SK-N-SH (cell line): ENCODE measurements at regions of chr7 and their contacts with region 1.

Region 1: DNA sequence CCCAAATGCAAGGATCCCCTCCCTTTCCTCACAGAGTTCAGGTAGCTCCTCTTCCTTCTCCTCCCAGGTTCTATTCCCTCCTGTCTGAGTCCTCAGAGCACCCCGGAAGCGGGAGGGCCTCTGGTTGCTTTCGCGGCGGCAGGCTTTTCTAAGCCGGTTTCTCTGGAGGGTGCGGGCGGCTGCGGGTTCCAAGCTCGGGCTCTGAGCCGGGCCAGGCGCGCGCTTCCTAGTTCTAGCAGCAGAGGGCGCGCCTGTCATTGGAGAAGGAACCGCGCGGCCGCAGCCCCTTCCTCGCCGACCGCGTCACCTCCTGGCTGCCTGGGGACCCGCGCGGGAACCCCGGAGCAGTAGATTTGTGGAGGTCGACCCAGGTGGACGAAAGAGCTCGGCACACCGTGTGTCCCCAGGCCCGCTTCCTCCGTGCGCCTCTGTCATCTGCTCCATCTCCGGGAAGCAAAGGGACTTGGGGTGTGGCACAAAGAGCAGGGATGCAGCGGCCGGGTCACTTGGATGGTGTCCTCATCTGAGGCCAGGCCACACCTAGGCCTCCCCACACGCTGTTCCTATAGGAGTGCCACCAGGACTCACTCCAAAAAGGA is 389.0 kb upstream of the PODXL start:
- DNase-seq: peak; percentile 93
- H3K4me3 ChIP-seq: peak overlapping the region; percentile 23 to 37
- H3K27ac ChIP-seq: peak overlapping the region in 1 of 2 experiments; percentile 31; a peak in 1 of 4 replicates
- H3K4me1 ChIP-seq: peaks cover 13 to 31% of the 10 kb centered on the region in 2 experiments; a peak in 3 of 4 replicates
- H3K27me3 ChIP-seq: no peaks in the 10 kb centered on the region
- CTCF ChIP-seq: peak; percentile 97
- EP300 ChIP-seq: no peak; a peak in 1 of 4 replicates
- RAD21 ChIP-seq: peak; percentile 95

Region 2: DNA sequence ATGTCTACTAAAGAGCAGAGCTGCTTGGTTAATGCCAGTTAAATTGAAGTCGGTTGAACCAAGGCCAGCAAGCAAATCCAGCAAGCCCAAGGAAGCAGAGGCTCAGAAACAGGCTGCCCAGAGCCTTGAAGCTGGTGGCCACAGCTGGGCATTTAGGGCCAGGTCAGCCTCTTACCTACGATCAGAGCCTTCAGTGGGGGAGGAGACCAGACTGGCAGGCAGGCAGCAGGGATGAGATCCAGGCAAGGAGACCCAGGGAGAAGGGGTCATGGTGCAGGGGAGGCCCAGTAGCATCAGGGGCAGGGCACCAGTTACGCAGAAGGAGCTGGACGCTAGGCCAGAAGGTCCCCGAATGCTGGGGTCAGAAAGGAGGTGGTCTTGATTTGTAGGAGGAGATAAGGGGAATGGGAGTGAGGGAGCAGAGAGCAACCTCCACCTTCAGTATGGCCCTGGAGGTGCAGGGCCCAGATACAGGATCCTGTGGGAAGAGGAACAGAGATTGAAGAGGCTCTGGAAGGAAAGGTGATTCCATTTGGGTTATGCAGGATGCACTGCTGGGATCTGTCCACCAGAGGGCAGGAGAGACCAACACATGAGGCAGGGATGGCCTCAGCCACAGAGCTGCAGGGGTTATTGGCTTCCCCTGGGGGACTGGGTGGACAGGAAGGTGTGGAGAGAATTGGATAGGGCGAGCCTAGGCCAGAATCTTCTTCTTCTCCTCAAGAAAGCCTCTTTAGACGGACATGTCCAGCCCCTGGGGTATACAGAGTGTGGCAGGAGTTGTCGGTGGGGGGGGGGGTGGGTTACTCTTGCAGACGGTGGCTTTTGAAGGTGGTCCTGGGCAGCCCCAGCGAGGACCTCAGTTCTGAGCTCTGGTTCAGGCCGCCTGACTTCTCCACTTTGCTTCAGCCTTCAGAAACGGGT is 256.4 kb before region 1 on chr7:
- CTCF ChIA-PET with region 1: interaction called, 37 read pairs
- POLR2A ChIA-PET with region 1: no interaction called
- DNase-seq: peak; percentile 95
- H3K4me3 ChIP-seq: no peak overlapping the region; a peak in 1 of 4 replicates
- H3K27ac ChIP-seq: no peak overlapping the region
- H3K4me1 ChIP-seq: peaks cover 0 to 4% of the 10 kb centered on the region in 2 experiments; a peak in 1 of 4 replicates
- H3K27me3 ChIP-seq: no peaks in the 10 kb centered on the region
- CTCF ChIP-seq: peak; percentile 99
- EP300 ChIP-seq: no peak
- RAD21 ChIP-seq: peak; percentile 100

Region 3: GRCh38 chr7:131836733-131837132 is 108.7 kb before region 1 on chr7:
- CTCF ChIA-PET with region 1: no interaction called
- POLR2A ChIA-PET with region 1: no interaction called
- DNase-seq: no peak
- H3K4me3 ChIP-seq: no peak overlapping the region
- H3K27ac ChIP-seq: no peak overlapping the region
- H3K4me1 ChIP-seq: no peaks in the 10 kb centered on the region
- H3K27me3 ChIP-seq: no peaks in the 10 kb centered on the region; the same call in 1 of the 2 replicates
- CTCF ChIP-seq: no peak
- EP300 ChIP-seq: no peak
- RAD21 ChIP-seq: no peak

Region 4: DNA sequence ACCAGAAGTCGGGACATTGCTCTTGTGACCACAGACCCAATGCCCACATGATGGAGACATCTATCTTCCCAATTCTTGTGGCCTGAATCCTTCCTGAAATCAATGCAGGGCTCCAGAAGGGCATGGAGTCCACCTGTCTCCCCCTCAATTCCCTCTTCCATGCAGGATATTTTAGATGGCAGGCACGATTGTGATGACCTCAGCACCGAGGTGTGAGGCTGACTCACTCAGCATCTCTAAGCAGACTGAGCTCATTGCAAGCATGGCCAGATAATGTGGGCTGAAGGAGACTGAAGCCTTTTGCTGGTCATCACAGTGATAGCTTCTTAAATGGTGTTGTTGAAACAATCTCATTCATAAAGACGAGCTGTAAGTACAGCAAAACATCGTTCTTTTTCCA is 14.0 kb before region 1 on chr7:
- CTCF ChIA-PET with region 1: interaction called, 17 read pairs
- POLR2A ChIA-PET with region 1: no interaction called
- DNase-seq: no peak
- H3K4me3 ChIP-seq: no peak overlapping the region
- H3K27ac ChIP-seq: no peak overlapping the region
- H3K4me1 ChIP-seq: no peaks in the 10 kb centered on the region
- H3K27me3 ChIP-seq: no peaks in the 10 kb centered on the region
- CTCF ChIP-seq: no peak
- EP300 ChIP-seq: no peak
- RAD21 ChIP-seq: no peak

Region 5: DNA sequence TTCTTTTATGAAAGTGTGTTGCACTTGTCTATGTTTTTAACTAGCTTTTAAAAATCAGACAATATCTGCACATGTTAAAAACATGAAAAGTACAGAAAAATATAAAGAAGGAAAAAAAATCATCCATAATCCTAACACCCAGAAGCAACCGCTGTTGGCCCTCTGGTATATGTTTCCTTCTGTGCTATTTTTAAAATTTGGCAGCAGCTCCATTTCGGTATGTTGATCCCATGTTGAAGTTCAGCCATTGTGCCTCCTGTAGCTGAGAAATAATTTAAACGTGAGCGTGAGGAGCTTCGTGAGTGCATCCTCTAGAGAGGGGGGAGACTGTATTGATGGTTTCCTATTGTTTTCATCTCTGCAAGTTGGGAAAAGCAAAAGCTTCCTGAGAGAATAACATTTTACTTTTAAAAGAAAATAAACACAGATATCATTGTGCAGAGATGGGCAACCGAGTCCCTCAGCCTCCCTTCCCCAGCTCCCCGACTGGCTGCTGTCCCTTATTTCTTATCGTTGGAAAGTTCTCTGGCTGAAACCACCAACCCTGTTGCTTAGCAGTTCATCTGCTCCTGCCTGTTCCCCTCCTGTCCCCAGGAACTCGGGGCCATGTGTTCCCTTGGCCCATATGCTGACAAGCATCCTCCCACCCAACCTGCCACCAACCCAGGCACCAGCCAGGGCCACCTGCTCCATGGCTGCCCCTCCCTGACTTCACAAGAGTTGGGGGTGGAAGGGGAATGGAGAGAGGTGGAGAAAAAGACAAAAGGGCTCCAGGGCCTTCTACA is 110.1 kb after region 1 on chr7:
- CTCF ChIA-PET with region 1: interaction called, 11 read pairs
- POLR2A ChIA-PET with region 1: no interaction called
- DNase-seq: no peak
- H3K4me3 ChIP-seq: no peak overlapping the region
- H3K27ac ChIP-seq: no peak overlapping the region
- H3K4me1 ChIP-seq: no peaks in the 10 kb centered on the region
- H3K27me3 ChIP-seq: no peaks in the 10 kb centered on the region
- CTCF ChIP-seq: no peak
- EP300 ChIP-seq: no peak
- RAD21 ChIP-seq: no peak

Region 6: DNA sequence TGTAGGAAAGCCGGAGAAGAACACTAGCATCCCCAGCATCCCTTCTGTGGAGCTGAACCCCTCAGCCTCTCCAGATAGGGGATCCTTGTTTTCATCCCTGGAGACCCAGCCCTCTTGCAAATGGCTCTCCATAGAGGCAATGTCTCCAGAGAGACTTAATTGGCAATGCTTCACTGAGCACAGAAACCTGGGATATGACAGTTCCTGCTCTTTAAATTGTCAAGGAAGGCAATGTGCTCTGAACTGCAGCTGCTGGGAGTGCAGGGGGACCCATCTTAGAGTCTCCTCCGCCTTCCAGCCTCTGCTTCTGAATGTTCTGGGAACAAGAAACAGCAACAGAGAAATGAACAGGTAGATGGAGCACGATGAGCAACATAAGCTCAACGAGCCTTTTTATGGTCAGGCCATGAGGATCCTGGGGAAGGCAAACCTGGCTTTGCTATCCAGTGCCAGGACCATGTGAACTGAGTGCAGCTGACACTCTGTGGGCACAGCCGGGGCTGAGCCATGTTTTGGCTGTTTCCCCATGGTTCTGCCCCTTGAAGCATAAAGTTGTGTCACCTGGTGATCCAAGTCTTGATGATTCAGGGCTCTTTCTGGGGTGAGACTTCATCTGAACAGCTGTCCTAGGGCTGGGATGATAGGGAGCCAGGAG is 149.8 kb after region 1 on chr7:
- CTCF ChIA-PET with region 1: no interaction called
- POLR2A ChIA-PET with region 1: no interaction called
- DNase-seq: no peak
- H3K4me3 ChIP-seq: no peak overlapping the region
- H3K27ac ChIP-seq: no peak overlapping the region
- H3K4me1 ChIP-seq: no peaks in the 10 kb centered on the region; a peak in 1 of 4 replicates
- H3K27me3 ChIP-seq: no peaks in the 10 kb centered on the region
- CTCF ChIP-seq: no peak
- EP300 ChIP-seq: no peak
- RAD21 ChIP-seq: no peak

Region 7: DNA sequence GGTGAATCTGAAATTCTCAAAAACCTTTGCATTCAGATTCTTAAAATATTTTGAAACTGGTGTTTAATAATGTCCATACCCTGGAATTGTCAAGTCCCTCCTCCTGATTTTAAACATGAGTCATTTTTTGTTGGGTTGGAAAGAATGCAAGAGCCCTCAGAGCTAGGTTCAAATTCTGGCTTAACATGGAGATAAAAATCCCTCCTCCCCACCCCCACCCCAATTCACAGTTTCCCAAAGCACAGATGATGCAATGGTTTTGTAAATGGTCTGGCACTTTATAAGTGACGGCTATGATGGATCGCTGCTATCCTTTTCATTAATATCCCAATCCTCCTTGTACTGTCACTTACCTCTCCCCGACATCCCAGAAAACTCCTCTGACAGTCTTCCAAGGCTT is 298.1 kb after region 1 on chr7:
- CTCF ChIA-PET with region 1: interaction called, 39 read pairs
- POLR2A ChIA-PET with region 1: interaction called, 3 read pairs
- DNase-seq: no peak
- H3K4me3 ChIP-seq: no peak overlapping the region
- H3K27ac ChIP-seq: no peak overlapping the region
- H3K4me1 ChIP-seq: peaks cover 5 to 9% of the 10 kb centered on the region in 2 experiments; a peak in 1 of 4 replicates
- H3K27me3 ChIP-seq: no peaks in the 10 kb centered on the region
- CTCF ChIP-seq: no peak
- EP300 ChIP-seq: no peak
- RAD21 ChIP-seq: no peak

Region 8: DNA sequence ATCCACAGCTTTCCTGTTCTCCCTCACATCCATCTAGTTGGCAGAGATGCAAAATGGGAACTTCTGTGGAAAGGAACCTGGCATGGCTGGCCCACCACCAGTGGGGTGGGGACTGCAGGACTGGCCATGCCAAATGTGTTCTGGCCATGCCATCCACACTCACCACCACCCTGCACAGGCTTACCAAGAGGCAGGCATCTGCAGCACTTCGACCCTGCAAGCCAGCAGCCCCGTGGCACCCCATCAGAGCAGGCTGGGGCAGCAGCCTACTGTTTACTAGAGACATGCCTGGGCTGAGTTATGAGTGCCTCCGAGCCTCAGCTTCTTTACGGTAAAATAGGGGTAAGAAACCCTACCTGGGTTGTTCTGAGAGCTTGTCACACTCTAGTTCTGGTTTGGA is 317.7 kb after region 1 on chr7:
- CTCF ChIA-PET with region 1: interaction called, 23 read pairs
- POLR2A ChIA-PET with region 1: no interaction called
- DNase-seq: no peak
- H3K4me3 ChIP-seq: no peak overlapping the region
- H3K27ac ChIP-seq: no peak overlapping the region
- H3K4me1 ChIP-seq: peaks cover 0 to 25% of the 10 kb centered on the region in 2 experiments; a peak in 1 of 4 replicates
- H3K27me3 ChIP-seq: 0 out of 2 replicates have a peak, but pooled peaks cover 7% of the 10 kb centered on the region
- CTCF ChIP-seq: no peak
- EP300 ChIP-seq: no peak
- RAD21 ChIP-seq: no peak